ENCODE measurements at regions of chr17 and their contacts with region 1.

Region 1: DNA sequence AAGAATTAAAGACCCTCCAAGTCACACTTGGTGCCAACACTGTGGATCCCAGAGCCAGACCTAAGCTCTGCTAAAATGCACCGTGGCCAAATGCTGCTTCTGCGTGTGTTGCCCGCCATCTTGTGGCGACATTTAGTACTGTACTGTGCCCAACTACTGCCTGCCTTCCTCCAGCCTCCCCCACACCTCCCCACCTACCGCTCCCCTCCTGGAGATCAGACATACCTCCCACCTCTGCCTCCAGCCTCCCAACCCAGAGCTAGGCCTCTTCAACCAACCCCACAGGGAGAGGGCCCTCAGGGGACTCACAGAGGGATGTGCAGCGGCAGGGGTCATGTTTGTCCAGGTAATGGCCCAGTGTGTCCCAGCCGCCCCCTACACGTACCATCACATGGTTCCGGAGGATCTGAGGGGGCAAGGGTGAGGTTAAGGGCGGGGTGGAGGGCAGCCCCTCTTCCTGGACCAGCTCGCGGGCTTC is 5.5 kb downstream of the GAS2L2 start:
- DNase-seq: peak; percentile 80
- H3K4me3 Mint-ChIP-seq: no peak overlapping the region
- H3K27ac Mint-ChIP-seq: no peak overlapping the region
- H3K4me1 Mint-ChIP-seq: no peaks in the 10 kb centered on the region
- H3K27me3 Mint-ChIP-seq: peaks cover 78% of the 10 kb centered on the region
- CTCF ChIP-seq: peak; percentile 89

Region 2: GRCh38 chr17:35170968-35171771 is 576.4 kb before region 1 on chr17:
- CTCF ChIA-PET with region 1: interaction called, 5 read pairs
- intact Hi-C with region 1: loop called (anchors 5 kb)
- DNase-seq: no peak
- H3K4me3 Mint-ChIP-seq: no peak overlapping the region
- H3K27ac Mint-ChIP-seq: no peak overlapping the region
- H3K4me1 Mint-ChIP-seq: no peaks in the 10 kb centered on the region
- H3K27me3 Mint-ChIP-seq: peaks cover 45% of the 10 kb centered on the region
- CTCF ChIP-seq: no peak

Region 3: DNA sequence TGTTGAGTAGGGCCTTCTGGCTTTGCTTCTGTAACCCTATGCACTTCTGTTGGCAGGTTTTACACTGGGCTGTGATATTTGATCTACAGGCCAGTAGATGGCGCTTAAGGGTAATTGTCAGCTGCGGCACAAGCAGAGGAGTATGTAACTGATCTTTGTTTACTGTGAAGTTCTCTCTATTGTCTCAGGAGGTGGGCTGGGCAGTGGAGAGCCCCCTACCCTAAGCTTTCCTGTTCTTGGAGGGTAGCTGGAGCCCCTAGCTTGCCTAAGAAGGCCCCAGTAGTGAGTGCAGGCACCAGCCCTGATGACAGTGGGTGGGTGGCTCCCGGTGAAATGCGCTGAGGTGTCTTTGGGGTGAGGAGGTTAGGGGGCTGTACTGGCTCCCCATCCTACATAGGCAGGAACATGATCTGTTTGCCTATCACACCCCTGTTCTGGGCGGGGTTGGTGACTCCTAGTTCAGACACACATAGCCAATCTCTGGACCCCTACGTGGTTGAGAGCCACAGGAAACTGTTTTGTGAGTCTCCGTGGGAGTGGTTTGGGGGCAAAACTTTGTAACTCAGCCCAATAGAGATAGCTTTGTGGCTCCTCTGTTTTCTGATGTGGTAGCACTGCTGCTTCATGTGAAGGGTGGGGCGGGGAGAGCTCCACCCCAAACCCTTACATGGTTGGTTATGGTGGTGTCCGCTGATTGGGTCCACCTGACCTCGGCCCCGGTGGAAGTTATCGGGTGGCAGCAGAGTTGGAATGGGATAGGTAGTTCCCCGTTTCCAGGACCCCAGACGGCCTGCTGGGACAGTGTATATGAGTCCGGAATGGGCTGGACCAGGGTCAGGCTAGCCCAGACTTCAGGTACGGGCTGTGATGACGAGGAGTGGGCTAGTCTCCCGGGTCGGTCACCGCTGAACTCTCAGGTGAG is 434.5 kb before region 1 on chr17:
- CTCF ChIA-PET with region 1: no interaction called
- intact Hi-C with region 1: loop called (anchors 10 kb)
- DNase-seq: peak; percentile 41
- H3K4me3 Mint-ChIP-seq: no peak overlapping the region
- H3K27ac Mint-ChIP-seq: no peak overlapping the region
- H3K4me1 Mint-ChIP-seq: peaks cover 19% of the 10 kb centered on the region
- H3K27me3 Mint-ChIP-seq: no peaks in the 10 kb centered on the region
- CTCF ChIP-seq: peak; percentile 75

Region 4: DNA sequence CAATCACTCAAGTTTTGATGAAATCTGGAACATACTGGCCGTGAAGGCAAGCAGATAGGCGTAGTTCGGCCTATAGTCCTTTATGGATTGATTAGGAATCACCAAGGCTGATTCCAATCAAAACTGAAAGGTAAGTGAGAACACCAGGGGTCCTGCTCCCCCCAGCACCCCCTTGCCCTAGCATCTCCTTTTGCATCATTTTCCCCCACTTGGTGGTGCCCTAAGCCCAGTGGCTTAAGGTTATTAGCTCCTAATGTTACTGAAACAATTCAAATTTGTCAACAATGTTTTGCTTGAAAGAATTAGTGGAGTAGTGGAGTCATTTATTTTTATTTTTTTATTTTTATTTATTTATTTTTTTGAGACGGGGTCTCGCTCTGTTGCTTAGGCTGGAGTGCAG is 191.9 kb before region 1 on chr17:
- CTCF ChIA-PET with region 1: interaction called, 6 read pairs
- intact Hi-C with region 1: loop called (anchors 2 kb)
- DNase-seq: no peak
- H3K4me3 Mint-ChIP-seq: no peak overlapping the region
- H3K27ac Mint-ChIP-seq: no peak overlapping the region
- H3K4me1 Mint-ChIP-seq: no peaks in the 10 kb centered on the region
- H3K27me3 Mint-ChIP-seq: peaks cover 72% of the 10 kb centered on the region
- CTCF ChIP-seq: no peak

Region 5: DNA sequence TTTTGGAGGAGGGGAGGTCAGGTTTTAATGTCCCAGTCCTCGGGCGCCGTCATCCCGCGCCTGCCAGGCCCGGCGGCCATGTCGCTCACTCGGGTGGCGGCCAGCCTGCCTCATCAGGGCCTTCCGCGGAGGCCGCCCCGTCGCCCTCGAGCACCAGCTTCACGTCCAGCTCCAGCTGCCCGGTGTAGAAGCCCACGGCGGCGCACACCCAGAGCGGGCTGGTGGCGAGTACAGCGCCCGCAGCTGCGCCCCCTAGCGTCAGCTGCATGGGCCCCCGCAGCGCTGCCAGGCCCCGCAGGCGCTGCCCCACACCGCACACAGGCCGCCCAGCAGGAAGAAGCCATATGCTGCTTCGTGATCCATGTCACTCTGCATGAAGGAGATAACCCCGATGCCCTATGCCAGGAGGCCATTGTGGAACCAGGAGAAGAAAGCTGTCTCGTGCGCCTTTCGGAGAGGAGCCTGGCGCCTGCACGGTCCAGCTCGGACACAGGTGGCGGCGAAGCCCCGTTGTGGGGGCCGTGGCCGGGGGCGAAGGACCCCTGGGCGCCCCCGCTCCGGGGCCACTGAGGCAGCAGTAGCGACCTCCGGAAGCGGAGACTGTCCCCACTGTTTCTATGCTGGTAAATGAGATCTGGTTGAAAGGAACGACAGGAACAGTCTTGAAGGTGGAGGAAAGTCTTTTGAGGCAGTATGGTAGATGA is 150.9 kb before region 1 on chr17:
- CTCF ChIA-PET with region 1: no interaction called
- intact Hi-C with region 1: no loop called
- DNase-seq: no peak
- H3K4me3 Mint-ChIP-seq: no peak overlapping the region
- H3K27ac Mint-ChIP-seq: no peak overlapping the region
- H3K4me1 Mint-ChIP-seq: no peaks in the 10 kb centered on the region
- H3K27me3 Mint-ChIP-seq: no peaks in the 10 kb centered on the region
- CTCF ChIP-seq: no peak

Region 6: GRCh38 chr17:35612924-35613521 is 134.6 kb before region 1 on chr17:
- CTCF ChIA-PET with region 1: interaction called, 25 read pairs
- intact Hi-C with region 1: loop called (anchors 1 kb)
- DNase-seq: peak; percentile 34
- H3K4me3 Mint-ChIP-seq: no peak overlapping the region
- H3K27ac Mint-ChIP-seq: no peak overlapping the region
- H3K4me1 Mint-ChIP-seq: no peaks in the 10 kb centered on the region
- H3K27me3 Mint-ChIP-seq: no peaks in the 10 kb centered on the region
- CTCF ChIP-seq: peak; percentile 28

Region 7: DNA sequence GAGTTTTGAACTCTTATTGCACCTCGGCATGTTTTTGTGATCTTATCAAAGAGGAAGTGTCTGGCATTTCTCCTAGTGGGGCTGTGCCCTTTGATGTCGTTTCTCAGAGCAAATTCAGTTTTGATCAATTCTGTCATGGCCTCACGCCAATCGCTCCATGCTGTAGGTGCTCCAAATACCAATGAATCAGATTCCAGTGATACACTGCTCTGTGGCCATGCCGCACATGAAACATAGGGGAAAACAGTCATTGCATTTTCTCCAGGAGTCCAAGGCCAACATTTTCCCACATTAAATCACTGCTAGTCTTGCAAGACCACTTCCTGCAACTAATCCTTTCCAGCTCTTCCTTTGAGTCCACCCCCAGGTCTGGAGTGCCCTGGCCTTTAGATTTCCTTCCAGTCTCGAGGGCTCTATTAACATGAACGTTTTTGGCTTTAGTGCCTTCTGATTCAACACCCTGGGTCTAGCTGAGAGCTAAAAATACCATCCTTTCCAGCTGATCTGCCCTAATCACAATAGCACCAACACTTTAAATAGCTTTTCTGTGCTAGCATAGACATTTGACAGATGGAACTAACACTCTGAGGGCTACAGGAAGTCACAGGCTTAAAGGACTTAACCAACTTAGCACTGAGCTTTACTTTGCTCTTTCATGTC is 34.4 kb before region 1 on chr17:
- CTCF ChIA-PET with region 1: no interaction called
- intact Hi-C with region 1: no loop called
- DNase-seq: no peak
- H3K4me3 Mint-ChIP-seq: no peak overlapping the region
- H3K27ac Mint-ChIP-seq: no peak overlapping the region
- H3K4me1 Mint-ChIP-seq: peaks cover 10% of the 10 kb centered on the region
- H3K27me3 Mint-ChIP-seq: no peaks in the 10 kb centered on the region
- CTCF ChIP-seq: no peak

Region 8: GRCh38 chr17:35764123-35764991 is 16.8 kb after region 1 on chr17:
- CTCF ChIA-PET with region 1: interaction called, 20 read pairs
- intact Hi-C with region 1: no loop called
- DNase-seq: peak; percentile 96
- H3K4me3 Mint-ChIP-seq: peak overlapping the region; percentile 93
- H3K27ac Mint-ChIP-seq: no peak overlapping the region
- H3K4me1 Mint-ChIP-seq: peaks cover 10% of the 10 kb centered on the region
- H3K27me3 Mint-ChIP-seq: peaks cover 42% of the 10 kb centered on the region
- CTCF ChIP-seq: peak; percentile 90

Measured in Calu3 (cell line).